Activated B cell treated with CpG ODN at 0.5 μM for 24 hours (primary cell): ENCODE measurements at regions of chr20 and their contacts with region 1.

Region 1: DNA sequence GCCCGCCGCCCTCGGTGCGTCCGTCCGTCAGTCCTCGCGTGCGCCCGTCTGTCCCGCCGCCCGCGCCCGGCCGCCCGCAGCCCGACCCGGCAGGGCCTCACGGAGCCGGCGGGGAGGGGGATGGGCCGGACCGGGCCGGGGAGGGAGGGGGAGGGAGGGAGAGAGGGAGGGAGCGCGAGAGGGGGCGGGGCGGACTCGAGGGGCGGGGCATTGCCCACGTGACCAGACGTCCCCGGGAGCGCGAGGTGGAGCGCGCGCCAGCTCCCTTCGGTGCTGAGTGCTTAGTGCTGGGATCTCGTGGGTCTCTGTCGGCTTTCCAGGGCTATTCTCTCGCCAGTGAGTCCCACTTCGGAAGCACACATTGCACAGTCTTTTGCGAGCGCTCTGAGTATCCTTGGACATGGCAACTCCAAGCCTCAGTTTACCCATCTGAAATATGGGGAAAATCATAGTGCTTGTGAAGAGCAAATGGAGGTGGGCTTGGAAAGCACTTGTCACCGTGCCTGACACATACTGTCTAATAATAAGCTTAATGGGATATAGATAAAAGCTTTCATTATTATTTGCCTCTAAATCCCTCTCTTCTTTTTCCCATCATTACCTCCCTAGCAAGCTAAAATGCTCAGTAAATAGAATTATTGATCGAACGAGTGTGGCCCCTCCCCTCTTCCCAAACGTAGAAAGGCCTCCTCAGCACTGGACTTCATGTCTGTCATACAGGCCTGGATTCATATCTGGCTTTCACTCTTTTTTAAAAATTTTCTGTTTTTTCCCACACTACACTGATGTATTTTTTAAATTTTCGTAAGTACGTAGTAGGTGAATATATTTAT is at the start of gene NCOA6:
- DNase-seq: peak; percentile 78
- ATAC-seq: peak; percentile 74
- H3K4me3 Mint-ChIP-seq: peak within 1 kb of the TSS; percentile 97
- H3K27ac Mint-ChIP-seq: peak within 1 kb of the TSS; percentile 90
- H3K4me1 Mint-ChIP-seq: peaks cover 41% of the 10 kb centered on the region
- H3K27me3 Mint-ChIP-seq: no peaks in the 10 kb centered on the region
- CTCF ChIP-seq: no peak
- total RNA-seq, gene NCOA6: 23.7 and 24.0 TPM in 2 replicates

Region 2: GRCh38 chr20:34797012-34797995 is 28.4 kb before region 1 on chr20:
- CTCF ChIA-PET with region 1: no interaction called
- POLR2A ChIA-PET with region 1: no interaction called
- intact Hi-C with region 1: no loop called
- DNase-seq: no peak
- ATAC-seq: no peak
- H3K4me3 Mint-ChIP-seq: no peak overlapping the region
- H3K27ac Mint-ChIP-seq: no peak overlapping the region
- H3K4me1 Mint-ChIP-seq: peaks cover 16% of the 10 kb centered on the region
- H3K27me3 Mint-ChIP-seq: no peaks in the 10 kb centered on the region
- CTCF ChIP-seq: no peak

Region 3: GRCh38 chr20:34955232-34956040 is 129.7 kb after region 1 on chr20 and contains the starts of genes GSS and MYH7B:
- CTCF ChIA-PET with region 1: no interaction called
- POLR2A ChIA-PET with region 1: interaction called, 3 read pairs
- intact Hi-C with region 1: loop called (anchors 2 kb)
- DNase-seq: peak; percentile 98
- ATAC-seq: peak; percentile 95
- H3K4me3 Mint-ChIP-seq: peak within 1 kb of the TSS; percentile 97
- H3K27ac Mint-ChIP-seq: peak within 1 kb of the TSS; percentile 83
- H3K4me1 Mint-ChIP-seq: peaks cover 26% of the 10 kb centered on the region
- H3K27me3 Mint-ChIP-seq: no peaks in the 10 kb centered on the region
- CTCF ChIP-seq: no peak
- total RNA-seq, gene GSS: 26.1 and 27.5 TPM in 2 replicates
- total RNA-seq, gene MYH7B: 0.20 and 0.35 TPM in 2 replicates